ENCODE measurements at regions of chr12 and their contacts with region 1.

Region 1: DNA sequence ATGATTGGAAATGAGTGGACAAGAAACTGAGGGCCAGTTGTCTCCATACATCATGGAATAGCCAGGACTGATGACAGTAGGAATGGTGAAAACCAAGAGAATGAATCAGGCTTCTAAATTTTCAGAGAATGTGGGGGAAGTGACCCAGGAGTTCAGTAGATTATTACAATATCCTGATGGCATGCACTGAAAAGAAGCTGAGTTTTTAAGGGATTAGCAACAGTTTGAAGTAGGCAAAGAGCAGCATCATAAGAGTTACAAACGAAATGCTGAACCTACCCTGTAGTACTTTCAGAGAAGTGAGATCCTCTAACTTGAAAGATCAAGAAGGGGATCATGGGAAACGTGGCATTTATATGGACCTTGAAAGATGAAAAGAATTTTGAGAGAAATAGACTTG is 13.2 kb downstream of the SLC2A14 start:
- DNase-seq: no peak

Region 2: GRCh38 chr12:6607751-6608591 is 1251.6 kb before region 1 on chr12:
- intact Hi-C with region 1: no loop called
- DNase-seq: no peak

Region 3: GRCh38 chr12:7566971-7567370 is 292.6 kb before region 1 on chr12:
- intact Hi-C with region 1: no loop called
- DNase-seq: no peak

Region 4: GRCh38 chr12:7948589-7949260 is 89.2 kb after region 1 on chr12:
- intact Hi-C with region 1: no loop called
- DNase-seq: no peak

Region 5: DNA sequence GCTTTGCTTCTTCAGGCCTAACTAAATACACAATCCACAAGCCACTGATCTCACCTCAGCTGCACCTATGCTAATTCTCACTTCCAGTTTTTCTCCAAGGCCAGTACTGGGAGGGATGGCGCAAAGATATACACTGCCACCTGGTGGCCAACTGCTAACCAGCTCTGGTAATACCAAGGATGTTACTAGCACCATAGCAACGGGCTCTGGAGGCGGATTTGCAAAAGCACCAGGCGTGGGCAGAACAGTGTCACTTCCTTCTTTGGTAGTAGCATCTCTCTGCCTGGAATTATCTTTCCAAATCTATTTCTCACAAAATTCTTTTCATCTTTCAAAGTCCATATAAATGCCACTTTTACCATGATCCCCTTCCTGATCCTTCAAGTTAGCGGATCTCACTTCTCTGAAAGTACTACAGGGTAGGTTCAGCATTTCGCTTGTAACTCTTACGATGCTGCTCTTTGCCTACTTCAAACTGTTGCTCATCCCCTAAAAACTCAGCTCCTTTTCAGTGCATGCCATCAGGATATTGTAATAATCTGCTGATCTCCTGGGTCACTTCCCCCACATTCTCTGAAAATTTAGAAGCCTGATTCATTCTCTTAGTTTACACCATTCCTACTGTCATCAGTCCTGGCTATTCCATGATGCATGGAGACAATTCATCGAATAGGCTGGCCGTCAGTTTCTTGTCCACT is 135.9 kb after region 1 on chr12:
- intact Hi-C with region 1: loop called (anchors 5 kb)
- DNase-seq: peak; percentile 92